Aorta (tissue), 5 donors: ENCODE measurements at regions of chr19 and their contacts with region 1.

Region 1: DNA sequence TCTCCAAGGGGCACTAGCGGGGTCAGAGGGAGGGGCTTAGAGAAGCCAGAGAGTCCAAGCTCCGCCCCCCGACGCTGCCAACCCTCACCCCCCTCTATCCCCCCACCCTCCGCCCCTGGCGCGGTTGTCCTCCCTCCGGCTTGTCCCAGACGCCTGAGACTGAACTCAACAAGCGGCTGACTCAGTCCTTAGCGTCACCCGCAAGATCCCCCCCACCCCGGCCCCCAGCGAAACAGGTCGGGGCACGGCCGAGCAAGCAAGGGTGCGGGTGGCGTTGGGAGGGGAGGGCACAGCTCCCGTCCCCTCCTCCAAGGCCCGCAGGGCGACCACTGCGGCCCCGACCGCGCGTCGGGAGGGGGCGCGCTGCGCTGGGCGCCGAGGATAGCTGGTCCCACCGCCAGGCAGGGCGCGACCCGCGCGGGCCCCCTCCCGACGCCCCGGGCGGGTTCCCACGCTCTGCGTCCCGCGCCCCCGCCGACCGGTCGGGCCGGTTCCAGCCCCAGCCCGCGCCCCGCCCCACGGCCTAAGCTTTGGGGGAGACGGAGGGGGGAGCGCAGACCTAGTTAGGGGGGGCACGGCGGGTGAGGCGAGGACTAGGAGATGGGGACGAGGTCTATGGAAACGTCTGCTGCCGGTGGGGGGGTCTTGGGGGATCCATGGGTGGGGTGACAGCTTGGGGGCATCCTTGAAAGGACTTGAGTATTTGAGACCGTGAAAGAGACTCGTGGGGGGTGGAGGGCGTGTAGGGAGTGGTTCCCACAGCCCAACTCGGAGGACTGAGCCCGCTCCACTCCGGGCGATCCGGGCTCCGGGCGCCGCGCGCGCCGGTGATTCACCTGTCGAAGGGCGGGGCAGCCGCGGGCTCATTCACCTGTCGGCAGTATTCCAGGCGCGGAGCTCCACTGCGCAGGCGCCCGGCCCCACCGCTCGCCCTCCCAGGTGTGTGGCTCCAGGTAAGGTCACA is 5.1 kb downstream of the NOTCH3 start:
- DNase-seq: peak; percentile 88 to 95
- ATAC-seq: peak; percentile 77
- H3K4me3 ChIP-seq: peak overlapping the region; percentile 58 to 65
- H3K27ac ChIP-seq: peak overlapping the region; percentile 16 to 64
- H3K4me1 ChIP-seq: peaks cover 0 to 5% of the 10 kb centered on the region in 2 donors
- H3K27me3 ChIP-seq: no peaks in the 10 kb centered on the region

Region 2: GRCh38 chr19:15210323-15210781 is 14.7 kb after region 1 on chr19:
- intact Hi-C with region 1: loop called in 1 of 2 experiments (anchors 1 kb)
- DNase-seq: peak; percentile 90 to 91
- ATAC-seq: peak; percentile 86
- H3K4me3 ChIP-seq: no peak overlapping the region
- H3K27ac ChIP-seq: peak overlapping the region in 1 of 2 donors; percentile 3
- H3K4me1 ChIP-seq: peaks cover 0 to 4% of the 10 kb centered on the region in 2 donors
- H3K27me3 ChIP-seq: no peaks in the 10 kb centered on the region

Region 3: GRCh38 chr19:15332311-15332996 is 136.8 kb after region 1 on chr19 and contains the start of gene BRD4:
- intact Hi-C with region 1: loop called in 1 of 2 experiments (anchors 5 kb)
- DNase-seq: peak; percentile 80 to 91
- ATAC-seq: peak; percentile 85
- H3K4me3 ChIP-seq: peak within 1 kb of the TSS; percentile 99 to 100
- H3K27ac ChIP-seq: peak within 1 kb of the TSS; percentile 99 to 100
- H3K4me1 ChIP-seq: peaks cover 0 to 2% of the 10 kb centered on the region in 2 donors
- H3K27me3 ChIP-seq: no peaks in the 10 kb centered on the region
- total RNA-seq, gene BRD4: 123 to 126 TPM

Region 4: DNA sequence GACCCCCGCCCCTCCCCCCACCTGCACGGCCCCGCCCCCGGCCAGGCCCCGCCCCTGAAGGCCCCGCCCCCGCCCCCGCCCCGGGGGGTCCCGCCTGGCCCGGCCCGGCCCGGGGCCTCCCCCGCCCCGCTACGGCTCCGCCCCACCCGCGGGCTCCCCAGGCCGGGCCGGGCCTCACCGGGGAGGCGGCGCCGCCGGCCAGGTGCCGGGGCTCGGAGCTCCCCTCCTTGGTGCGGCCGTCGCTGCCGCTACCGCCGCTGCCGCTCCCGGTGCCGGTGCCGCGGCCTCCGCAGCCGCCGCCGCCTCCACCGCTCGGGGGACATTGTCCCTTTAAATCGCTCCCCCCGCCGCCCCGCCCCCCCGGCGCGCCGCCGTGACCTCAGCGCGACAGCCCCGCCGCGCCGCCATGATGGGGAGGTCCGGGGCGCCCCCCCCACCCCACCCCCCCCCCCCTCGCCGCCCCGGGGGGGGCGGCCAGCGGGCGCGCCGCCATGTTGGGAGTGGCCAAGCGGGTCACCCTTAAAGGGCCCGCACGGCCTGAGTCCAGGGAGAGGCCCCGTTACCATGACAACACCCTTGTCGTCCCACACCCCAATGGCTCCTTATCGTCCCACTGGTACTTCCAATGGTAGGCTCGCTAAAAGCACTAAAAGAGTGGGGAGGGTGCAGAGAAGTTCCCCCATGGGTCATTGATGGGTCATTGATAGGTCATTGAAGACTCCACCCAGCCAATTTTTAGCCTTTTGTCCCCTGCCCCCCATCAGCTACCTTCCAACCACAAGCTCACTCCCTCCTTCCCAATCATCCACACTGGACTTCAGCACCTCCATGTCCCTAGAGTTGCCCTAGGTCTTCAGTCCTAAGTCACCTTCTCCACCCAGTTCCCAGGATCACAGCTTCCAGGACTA is 254.2 kb after region 1 on chr19 and contains the start of gene WIZ:
- intact Hi-C with region 1: loop called in 1 of 2 experiments (anchors 5 kb)
- DNase-seq: peak; percentile 92 to 95
- ATAC-seq: peak; percentile 36
- H3K4me3 ChIP-seq: peak within 1 kb of the TSS; percentile 51 to 66
- H3K27ac ChIP-seq: peak within 1 kb of the TSS in 1 of 2 donors; percentile 78
- H3K4me1 ChIP-seq: peaks cover 0 to 1% of the 10 kb centered on the region in 2 donors
- H3K27me3 ChIP-seq: no peaks in the 10 kb centered on the region
- total RNA-seq, gene WIZ: 38.0 to 41.4 TPM